B cell (primary cell): ENCODE measurements at regions of chr16 and their contacts with region 1.

Region 1: DNA sequence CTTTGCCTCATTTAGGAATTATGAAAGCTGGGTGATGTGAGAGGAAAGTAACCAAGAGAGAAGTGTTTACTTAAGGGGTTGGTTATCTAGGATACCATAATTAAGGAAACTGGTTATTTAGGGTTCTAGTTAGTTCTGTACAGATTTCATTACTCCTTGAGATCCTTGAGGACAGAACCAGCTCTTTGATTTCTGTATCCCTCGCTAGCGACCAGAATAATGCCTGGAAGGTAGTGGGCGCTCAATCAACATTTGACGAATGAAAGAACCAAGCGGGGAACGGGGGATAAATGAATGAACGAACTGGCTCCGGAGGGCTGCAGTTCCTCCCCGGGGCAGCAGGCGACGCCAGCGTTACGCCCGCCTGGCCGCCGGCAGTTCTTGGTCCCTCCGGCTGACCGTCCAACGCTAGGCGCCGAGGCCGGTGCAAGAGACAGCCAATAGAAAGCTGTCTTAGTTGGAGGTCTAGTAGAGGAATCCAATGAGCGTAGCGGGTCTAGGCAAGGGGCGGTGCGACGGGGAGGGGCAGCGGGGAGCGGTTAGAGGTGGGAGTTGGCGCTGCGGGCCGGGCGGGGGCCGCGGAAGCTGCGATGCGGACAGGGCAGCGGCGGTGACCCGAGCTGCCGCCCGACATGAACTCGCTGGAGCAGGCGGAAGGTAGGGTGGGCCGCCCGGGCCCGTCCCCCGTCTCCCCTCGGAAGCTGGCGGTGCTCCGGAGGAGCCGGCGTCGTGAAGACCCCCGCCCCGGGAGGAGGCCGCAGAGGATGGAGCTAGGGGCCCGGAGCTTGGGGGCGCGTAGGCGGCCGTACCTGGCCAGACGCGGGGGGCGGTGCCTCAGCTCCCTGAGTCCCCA is at the start of gene CNEP1R1:
- DNase-seq: peak; percentile 98
- ATAC-seq: peak; percentile 94
- H3K4me3 ChIP-seq: peak within 1 kb of the TSS; percentile 87 to 93 (median 92)
- H3K4me3 Mint-ChIP-seq: peak within 1 kb of the TSS; percentile 93
- H3K27ac ChIP-seq: peak within 1 kb of the TSS; percentile 31 to 78
- H3K27ac Mint-ChIP-seq: peak within 1 kb of the TSS; percentile 89
- H3K4me1 ChIP-seq: peaks cover 12 to 14% of the 10 kb centered on the region in 2 donors
- H3K4me1 Mint-ChIP-seq: peaks cover 23% of the 10 kb centered on the region
- H3K27me3 ChIP-seq: no peaks in the 10 kb centered on the region
- H3K27me3 Mint-ChIP-seq: peaks cover 7% of the 10 kb centered on the region
- CTCF ChIP-seq: peak; percentile 100
- total RNA-seq, gene CNEP1R1: 32.9 and 36.9 TPM in 2 replicates

Region 2: DNA sequence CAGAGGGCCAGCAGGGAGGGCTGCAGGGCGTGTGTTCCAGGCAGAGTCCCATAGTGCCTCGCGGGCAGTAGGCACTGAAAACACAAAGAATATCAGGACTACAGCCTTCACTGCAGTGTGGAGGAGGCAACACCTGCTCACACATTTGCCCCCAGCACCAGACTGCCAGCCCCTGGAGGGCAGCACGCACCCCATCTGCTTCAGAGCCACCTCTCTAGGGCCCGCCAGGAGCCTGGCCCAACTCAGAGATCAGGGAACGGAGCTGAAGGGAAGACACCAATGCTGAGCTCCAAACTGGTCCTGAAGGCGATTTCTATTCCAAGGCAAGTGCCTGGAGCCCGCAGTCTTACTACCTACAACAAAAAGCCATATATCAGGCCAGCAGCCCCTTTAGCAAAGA is 299.3 kb before region 1 on chr16:
- CTCF ChIA-PET with region 1: no interaction called
- POLR2A ChIA-PET with region 1: no interaction called
- intact Hi-C with region 1: no loop called
- DNase-seq: no peak
- ATAC-seq: no peak
- H3K4me3 ChIP-seq: no peak overlapping the region
- H3K4me3 Mint-ChIP-seq: no peak overlapping the region
- H3K27ac ChIP-seq: no peak overlapping the region
- H3K27ac Mint-ChIP-seq: no peak overlapping the region
- H3K4me1 ChIP-seq: no peaks in the 10 kb centered on the region
- H3K4me1 Mint-ChIP-seq: peaks cover 1% of the 10 kb centered on the region
- H3K27me3 ChIP-seq: no peaks in the 10 kb centered on the region
- H3K27me3 Mint-ChIP-seq: no peaks in the 10 kb centered on the region
- CTCF ChIP-seq: no peak

Region 3: DNA sequence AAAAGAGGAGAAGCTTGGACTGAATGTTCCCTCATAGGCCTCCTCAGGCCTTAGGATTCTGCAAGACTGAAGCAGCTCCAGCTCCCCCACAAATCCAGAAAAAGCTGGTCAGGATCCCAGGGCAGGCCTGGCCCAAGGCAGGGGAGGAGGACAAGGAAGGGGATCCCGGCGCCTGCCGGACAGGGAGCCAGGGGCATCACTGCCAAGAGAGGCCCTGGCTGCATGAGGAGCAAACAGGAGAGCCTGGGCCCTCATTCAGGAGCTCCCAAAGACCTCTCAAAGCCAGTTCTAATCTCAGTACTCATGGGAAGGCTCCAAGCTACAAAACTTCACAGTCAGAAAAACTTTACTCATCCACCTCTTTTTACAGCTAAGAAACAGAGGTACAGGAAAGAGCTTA is 236.3 kb before region 1 on chr16:
- CTCF ChIA-PET with region 1: no interaction called
- POLR2A ChIA-PET with region 1: no interaction called
- intact Hi-C with region 1: no loop called
- DNase-seq: no peak
- ATAC-seq: no peak
- H3K4me3 ChIP-seq: no peak overlapping the region
- H3K4me3 Mint-ChIP-seq: no peak overlapping the region
- H3K27ac ChIP-seq: no peak overlapping the region
- H3K27ac Mint-ChIP-seq: no peak overlapping the region
- H3K4me1 ChIP-seq: no peaks in the 10 kb centered on the region
- H3K4me1 Mint-ChIP-seq: no peaks in the 10 kb centered on the region
- H3K27me3 ChIP-seq: no peaks in the 10 kb centered on the region
- H3K27me3 Mint-ChIP-seq: peaks cover 3% of the 10 kb centered on the region
- CTCF ChIP-seq: no peak

Region 4: DNA sequence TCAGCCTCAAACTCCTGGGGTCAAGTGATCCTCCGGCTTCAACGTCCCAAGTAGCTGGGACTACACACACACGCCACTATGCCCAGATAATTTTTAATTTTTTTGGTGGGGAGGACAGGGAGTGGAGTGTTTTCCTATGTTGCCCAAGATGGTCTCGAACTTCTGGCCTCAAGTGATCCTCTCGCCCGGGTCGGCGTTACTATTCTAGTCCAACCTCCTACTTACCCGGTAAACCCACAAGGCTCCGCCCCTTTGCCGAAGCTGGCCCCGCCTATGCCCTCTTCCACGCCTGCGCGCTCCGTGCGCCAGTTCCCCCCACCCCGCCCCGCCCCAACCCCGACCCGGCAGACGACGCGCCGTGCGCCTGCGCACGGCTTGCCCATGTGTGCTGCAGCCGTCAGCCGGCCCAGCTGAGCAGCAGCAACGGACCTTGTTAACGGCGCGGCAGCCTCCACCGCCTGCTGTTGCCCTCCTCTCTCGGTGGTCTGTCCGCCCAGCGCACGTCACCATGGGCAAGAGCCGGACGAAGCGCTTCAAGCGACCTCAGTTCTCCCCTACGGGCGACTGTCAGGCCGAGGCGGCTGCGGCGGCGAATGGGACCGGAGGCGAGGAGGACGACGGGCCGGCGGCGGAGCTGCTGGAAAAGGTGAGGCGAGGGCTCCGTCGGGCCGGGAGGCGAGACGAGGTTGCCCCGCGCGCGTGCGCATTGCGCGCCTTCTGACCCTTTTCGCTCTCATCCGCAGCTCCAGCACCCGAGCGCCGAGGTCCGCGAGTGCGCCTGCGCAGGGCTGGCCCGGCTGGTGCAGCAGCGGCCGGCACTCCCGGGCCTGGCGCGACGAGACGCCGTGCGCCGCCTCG is 40.9 kb after region 1 on chr16 and contains the start of gene HEATR3:
- CTCF ChIA-PET with region 1: interaction called, 22 read pairs
- POLR2A ChIA-PET with region 1: interaction called, 7 read pairs
- intact Hi-C with region 1: loop called (anchors 1 kb)
- DNase-seq: peak; percentile 95
- ATAC-seq: peak; percentile 86
- H3K4me3 ChIP-seq: peak within 1 kb of the TSS; percentile 39 to 82 (median 75)
- H3K4me3 Mint-ChIP-seq: peak within 1 kb of the TSS; percentile 89
- H3K27ac ChIP-seq: peak within 1 kb of the TSS; percentile 47 to 63
- H3K27ac Mint-ChIP-seq: peak within 1 kb of the TSS; percentile 92
- H3K4me1 ChIP-seq: peaks cover 17 to 20% of the 10 kb centered on the region in 2 donors
- H3K4me1 Mint-ChIP-seq: peaks cover 35% of the 10 kb centered on the region
- H3K27me3 ChIP-seq: no peaks in the 10 kb centered on the region
- H3K27me3 Mint-ChIP-seq: no peaks in the 10 kb centered on the region
- CTCF ChIP-seq: no peak
- total RNA-seq, gene HEATR3: 21.0 and 21.2 TPM in 2 replicates

Region 5: DNA sequence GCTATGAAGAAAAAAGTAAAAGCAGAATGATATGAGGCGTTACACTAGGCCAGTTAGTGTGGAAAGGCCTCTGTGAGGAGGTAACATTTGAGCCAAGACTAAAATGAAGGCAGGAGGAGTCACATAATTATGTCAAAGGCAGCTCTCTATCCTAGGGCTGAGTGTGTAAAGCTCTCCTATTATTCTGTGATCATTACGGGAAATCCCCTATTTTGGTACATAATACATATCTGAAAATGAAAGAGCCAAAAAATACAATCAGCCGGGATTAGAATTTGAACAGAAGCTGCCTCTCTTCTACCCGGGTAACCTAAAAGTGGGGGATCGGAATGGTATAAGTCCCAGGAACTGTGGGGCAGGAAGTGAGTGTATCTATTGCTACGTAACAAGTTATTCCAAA is 68.0 kb after region 1 on chr16:
- CTCF ChIA-PET with region 1: no interaction called
- POLR2A ChIA-PET with region 1: no interaction called
- intact Hi-C with region 1: no loop called
- DNase-seq: no peak
- ATAC-seq: no peak
- H3K4me3 ChIP-seq: no peak overlapping the region
- H3K4me3 Mint-ChIP-seq: no peak overlapping the region
- H3K27ac ChIP-seq: no peak overlapping the region
- H3K27ac Mint-ChIP-seq: no peak overlapping the region
- H3K4me1 ChIP-seq: no peaks in the 10 kb centered on the region
- H3K4me1 Mint-ChIP-seq: no peaks in the 10 kb centered on the region
- H3K27me3 ChIP-seq: no peaks in the 10 kb centered on the region
- H3K27me3 Mint-ChIP-seq: no peaks in the 10 kb centered on the region
- CTCF ChIP-seq: no peak

Region 6: DNA sequence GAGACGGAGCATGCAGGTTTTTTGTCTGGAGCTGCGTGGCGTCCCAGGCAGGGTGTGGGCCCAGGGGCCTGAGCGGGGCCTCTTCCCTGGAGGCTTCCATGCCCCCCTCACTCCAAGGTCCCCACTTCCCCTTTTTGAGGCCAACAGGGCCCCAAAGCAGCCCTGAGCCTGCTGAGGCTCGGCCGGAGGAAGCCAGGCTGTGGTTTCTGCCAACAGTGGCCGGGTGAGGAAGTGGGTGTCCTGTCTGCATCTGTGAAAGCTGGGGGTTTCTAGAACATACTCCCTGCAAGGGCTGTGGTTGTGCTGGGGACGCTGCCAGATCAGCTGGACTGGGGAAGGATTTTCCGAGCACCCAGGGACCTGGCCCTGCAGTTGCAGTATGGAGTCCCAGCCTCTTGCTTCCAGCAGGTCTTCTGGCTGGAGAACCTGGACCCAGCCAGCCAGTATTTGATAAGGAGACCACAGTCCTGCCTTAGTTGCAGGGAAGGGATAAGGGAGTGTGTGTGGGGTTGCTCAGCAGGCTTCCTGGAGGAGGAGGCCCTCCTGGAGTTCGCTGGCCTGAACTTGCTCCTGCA is 257.1 kb after region 1 on chr16:
- CTCF ChIA-PET with region 1: no interaction called
- POLR2A ChIA-PET with region 1: no interaction called
- intact Hi-C with region 1: loop called (anchors 5 kb)
- DNase-seq: peak; percentile 92
- ATAC-seq: peak; percentile 90
- H3K4me3 ChIP-seq: peak overlapping the region in 4 of 5 experiments; percentile 34 to 54 (median 50)
- H3K4me3 Mint-ChIP-seq: peak overlapping the region; percentile 84
- H3K27ac ChIP-seq: peak overlapping the region; percentile 65 to 93
- H3K27ac Mint-ChIP-seq: peak overlapping the region; percentile 100
- H3K4me1 ChIP-seq: peaks cover 85 to 87% of the 10 kb centered on the region in 2 donors
- H3K4me1 Mint-ChIP-seq: peaks cover 86% of the 10 kb centered on the region
- H3K27me3 ChIP-seq: no peaks in the 10 kb centered on the region
- H3K27me3 Mint-ChIP-seq: no peaks in the 10 kb centered on the region
- CTCF ChIP-seq: no peak

Region 7: DNA sequence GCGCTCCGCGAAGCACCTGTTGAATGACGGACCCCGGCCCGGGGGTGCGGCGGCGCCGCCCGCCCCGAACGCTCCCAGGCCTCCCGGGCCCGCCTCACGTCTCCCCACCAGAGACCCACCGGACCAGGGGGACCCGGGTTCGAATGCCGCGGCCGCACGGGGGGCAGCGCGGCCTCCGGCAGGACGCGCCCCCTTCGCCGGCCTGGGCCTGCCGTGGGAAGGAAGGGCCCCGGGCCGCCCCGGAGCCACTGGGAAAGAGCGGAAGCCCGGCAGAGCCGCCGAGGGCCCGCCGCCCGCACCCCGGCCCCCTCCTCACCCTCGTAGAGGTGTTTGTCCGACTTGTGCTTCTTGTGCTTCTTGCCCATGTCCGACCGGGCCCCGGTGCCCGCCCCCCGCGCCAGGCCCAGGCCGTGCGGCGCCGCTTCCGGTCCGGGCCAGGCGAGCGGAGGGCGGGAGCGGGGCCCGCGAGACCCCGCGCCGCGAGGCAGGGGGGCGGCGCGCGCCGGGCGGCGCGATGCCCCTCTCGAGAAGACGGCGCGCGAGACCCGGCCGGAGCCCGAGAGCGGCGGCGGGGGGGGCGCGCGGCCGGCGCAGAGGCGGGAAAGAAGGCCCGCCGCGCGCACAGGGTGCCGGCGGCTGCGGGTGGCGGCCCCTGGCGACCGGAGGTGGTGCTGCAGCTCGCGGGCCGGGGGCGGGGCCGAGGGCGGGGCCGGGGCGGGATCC is 343.7 kb after region 1 on chr16 and contains the start of gene BRD7:
- CTCF ChIA-PET with region 1: interaction called, 5 read pairs
- POLR2A ChIA-PET with region 1: no interaction called
- intact Hi-C with region 1: loop called (anchors 5 kb)
- DNase-seq: peak; percentile 85
- ATAC-seq: peak; percentile 95
- H3K4me3 ChIP-seq: peak within 1 kb of the TSS; percentile 45 to 82 (median 66)
- H3K4me3 Mint-ChIP-seq: peak within 1 kb of the TSS; percentile 91
- H3K27ac ChIP-seq: peak within 1 kb of the TSS; percentile 57 to 88
- H3K27ac Mint-ChIP-seq: peak within 1 kb of the TSS; percentile 88
- H3K4me1 ChIP-seq: peaks cover 26 to 32% of the 10 kb centered on the region in 2 donors
- H3K4me1 Mint-ChIP-seq: peaks cover 41% of the 10 kb centered on the region
- H3K27me3 ChIP-seq: no peaks in the 10 kb centered on the region
- H3K27me3 Mint-ChIP-seq: peaks cover 4% of the 10 kb centered on the region
- CTCF ChIP-seq: peak; percentile 56
- total RNA-seq, gene BRD7: 64.5 and 69.7 TPM in 2 replicates